Right ventricle myocardium superior (tissue), 1 donor: ENCODE measurements at regions of chr1 and their contacts with region 1.

Region 1: GRCh38 chr1:225474986-225475820 is 47.4 kb upstream of the LBR start:
- DNase-seq: peak; percentile 79
- ATAC-seq: peak; percentile 94

Region 2: DNA sequence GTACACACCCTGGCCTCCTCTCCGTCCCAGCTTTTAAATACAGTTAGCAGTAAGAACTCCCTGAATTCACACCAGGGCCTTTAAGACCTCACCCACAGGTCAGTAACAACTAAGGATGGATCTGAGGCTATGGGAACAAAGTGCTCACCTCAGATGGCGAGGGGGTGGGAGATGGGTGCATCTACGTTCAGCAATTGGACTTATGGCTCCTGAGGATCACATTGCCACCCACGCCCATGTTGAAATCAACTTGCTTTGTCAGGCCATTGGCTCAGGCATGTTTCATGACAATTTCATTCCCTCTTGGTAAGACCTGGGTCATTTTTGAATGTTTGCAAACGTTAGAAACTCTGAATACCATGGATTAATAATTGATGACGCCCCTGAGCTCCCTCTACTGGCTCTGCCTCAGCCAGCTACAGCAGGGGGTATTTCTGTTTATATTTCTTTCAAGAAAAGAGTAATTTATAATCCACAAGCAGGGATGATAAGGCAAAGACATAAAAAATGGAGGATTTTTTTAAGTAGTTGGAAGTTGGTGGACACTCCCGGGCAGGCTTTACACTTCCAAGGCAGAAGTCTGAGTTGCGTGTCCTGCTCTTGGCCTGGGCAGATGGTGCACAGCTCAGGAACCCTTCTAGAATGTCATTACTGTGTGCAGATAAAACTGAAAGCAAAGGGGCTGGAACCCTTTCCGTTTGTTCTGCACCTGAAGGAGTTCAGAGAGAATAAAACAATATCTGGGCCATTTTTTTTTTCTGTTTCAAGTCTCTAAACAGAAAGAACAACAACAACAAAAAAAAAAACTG is 33.7 kb before region 1 on chr1:
- intact Hi-C with region 1: no loop called
- DNase-seq: no peak
- ATAC-seq: no peak

Region 3: GRCh38 chr1:225772323-225772768 is 297.1 kb after region 1 on chr1:
- intact Hi-C with region 1: loop called (anchors 5 kb)
- DNase-seq: peak; percentile 84
- ATAC-seq: peak; percentile 89

Region 4: DNA sequence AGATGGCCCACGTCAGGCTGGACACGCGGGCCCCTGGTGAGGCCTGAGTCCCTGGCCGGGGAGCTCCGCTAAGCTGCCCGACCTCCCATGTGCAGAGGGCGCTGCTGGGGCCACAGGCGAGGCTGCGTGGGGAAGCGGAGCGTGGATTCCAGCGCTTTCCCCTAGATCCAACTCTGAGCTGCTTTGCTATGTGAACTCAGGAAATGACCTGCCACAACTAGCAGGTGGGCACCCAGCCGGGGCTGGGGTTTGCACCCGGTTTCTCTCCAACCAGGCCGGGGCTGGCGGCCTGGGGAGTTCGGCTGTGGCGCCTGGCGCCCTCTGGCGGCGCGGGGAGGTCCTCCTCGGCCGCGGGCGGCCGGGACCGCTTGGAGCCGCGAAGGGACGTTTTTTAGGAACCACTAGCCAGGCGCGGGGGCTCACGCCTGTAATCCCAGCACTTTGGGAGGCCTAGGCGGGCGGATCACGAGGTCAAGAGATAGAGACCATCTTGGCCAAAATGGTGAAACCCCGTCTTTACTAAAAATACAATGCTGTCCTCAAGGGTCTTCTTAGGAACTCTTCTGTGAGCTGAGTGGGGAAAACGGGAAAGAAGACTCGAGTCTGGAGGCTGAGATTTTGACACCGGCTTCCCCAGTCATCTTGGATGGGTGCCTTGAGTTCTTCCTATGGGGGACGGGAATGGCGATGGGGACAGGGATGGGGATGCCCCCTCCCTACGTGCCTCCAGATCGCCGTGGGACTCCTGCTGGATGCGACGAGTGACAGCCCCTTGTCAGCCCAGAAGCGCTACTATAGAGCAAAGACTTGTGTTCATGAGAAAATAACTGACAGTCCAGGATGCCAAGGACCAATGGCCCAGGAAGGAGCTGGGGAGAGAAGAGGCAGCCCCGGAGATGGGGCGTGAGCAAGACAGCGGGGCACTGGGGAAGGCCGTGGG is 436.3 kb after region 1 on chr1:
- intact Hi-C with region 1: loop called (anchors 2 kb)
- DNase-seq: peak; percentile 84
- ATAC-seq: peak; percentile 96

Region 5: GRCh38 chr1:225977937-225978748 is 502.9 kb after region 1 on chr1:
- intact Hi-C with region 1: loop called (anchors 2 kb)
- DNase-seq: no peak
- ATAC-seq: no peak